ENCODE measurements at regions of chr19 and their contacts with region 1.

Region 1: DNA sequence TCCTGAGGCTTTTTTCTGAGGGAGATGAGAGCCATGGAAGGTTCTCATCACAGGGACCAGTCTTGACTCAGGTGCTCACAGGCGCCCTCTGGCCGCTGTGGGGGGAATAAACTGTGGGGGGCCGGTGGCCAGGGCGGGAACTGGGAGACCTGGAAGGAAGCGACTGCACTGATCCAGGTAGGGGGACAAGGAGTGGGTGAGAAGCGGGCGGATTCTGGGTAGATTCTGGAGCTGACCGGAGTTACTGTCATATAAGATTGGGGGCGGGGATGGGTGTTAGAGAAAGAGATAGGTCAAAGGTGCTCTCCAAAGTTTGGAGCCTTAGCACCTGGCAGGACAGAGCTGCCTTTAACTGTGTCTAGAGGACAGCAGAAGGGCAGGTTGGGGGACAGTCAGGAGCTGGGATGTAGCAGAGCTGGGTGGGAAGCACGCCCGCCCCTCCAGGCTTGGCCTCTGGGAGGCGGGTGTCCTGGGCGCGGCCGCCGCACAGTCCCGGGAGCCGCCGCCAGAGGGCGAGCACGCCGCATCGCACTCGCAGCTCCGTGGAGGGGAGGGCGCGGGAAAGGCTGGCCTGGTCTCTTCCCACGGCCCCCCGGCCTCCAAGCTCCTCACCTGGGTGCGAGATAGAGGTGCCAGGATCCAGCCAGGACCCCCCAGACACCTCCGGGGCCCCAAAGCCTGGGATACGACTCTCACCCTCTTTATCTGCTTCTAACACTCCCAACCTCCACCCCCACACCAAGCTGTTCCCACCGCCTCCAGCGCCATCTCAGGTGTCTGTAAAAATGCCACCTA is 4.2 kb upstream of the DAND5 start:
- DNase-seq: peak; percentile 88
- CTCF ChIP-seq: peak; percentile 99

Region 2: DNA sequence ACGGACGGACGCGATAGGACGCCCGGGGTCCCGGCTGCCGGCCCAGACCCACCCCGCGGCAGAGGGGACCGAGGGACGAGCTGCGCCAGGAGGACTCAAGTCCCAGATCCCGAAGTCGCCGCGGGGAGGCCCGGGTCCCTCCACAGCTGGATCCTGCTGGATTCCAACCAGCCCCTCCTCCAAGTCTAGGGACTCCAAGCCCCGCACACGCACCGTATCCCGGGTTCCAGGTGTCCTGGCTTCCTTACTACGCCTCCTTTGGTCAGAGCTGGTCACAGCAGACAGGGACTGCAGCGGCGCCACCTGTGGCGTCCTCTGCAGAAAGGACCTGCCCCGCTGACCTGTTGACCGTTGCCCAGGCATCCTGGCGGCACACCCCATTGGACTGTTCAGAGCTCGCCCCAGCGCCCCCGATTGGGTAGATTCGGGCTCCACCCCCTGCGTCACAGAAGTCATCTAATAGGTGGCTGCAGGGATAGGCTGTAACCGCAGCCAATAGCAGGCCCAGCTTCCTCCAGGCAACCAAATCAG is 451.6 kb before region 1 on chr19:
- CTCF ChIA-PET with region 1: no interaction called
- POLR2A ChIA-PET with region 1: no interaction called
- DNase-seq: no peak
- CTCF ChIP-seq: no peak

Region 3: GRCh38 chr19:12890787-12891552 is 74.2 kb before region 1 on chr19 and contains the start of gene GCDH:
- CTCF ChIA-PET with region 1: interaction called, 36 read pairs
- POLR2A ChIA-PET with region 1: interaction called, 3 read pairs
- DNase-seq: peak; percentile 97
- CTCF ChIP-seq: no peak

Region 4: GRCh38 chr19:12947702-12948584 is 17.3 kb before region 1 on chr19:
- CTCF ChIA-PET with region 1: interaction called, 56 read pairs
- POLR2A ChIA-PET with region 1: no interaction called
- DNase-seq: no peak
- CTCF ChIP-seq: no peak

Region 5: DNA sequence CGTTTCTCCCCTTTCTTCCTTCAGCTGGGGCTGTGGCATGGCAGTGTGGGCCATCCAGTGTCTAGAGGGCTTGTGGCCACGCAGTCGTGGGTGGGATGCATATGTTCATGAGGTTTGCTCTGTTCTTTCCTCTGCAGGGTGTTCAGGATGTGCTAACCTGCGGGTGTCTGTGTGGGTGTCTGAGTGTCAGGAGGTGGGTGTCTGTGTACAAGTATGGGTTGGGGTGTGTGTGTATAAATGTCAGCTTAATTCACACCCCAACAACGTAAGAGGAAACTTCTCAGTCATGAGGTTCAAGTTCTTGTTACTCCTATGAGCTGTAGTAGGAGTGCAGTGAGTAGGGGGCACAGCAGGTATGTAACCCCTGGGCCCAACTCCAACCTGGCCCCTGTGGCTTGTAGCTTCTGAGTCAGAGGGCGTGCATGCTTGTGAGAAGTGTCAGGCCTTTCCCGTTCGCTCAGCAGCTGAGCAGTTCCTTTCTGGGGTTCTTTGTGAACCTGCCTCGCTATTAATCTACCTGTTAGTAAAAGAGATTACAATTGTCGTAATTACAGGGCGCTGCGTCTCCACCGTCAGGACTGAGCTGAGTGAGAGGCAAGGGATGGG is 79.1 kb after region 1 on chr19:
- CTCF ChIA-PET with region 1: interaction called, 13 read pairs
- POLR2A ChIA-PET with region 1: no interaction called
- DNase-seq: no peak
- CTCF ChIP-seq: no peak

Region 6: GRCh38 chr19:13082192-13083007 is 117.2 kb after region 1 on chr19:
- CTCF ChIA-PET with region 1: interaction called, 26 read pairs
- POLR2A ChIA-PET with region 1: no interaction called
- DNase-seq: no peak
- CTCF ChIP-seq: peak; percentile 7

Region 7: DNA sequence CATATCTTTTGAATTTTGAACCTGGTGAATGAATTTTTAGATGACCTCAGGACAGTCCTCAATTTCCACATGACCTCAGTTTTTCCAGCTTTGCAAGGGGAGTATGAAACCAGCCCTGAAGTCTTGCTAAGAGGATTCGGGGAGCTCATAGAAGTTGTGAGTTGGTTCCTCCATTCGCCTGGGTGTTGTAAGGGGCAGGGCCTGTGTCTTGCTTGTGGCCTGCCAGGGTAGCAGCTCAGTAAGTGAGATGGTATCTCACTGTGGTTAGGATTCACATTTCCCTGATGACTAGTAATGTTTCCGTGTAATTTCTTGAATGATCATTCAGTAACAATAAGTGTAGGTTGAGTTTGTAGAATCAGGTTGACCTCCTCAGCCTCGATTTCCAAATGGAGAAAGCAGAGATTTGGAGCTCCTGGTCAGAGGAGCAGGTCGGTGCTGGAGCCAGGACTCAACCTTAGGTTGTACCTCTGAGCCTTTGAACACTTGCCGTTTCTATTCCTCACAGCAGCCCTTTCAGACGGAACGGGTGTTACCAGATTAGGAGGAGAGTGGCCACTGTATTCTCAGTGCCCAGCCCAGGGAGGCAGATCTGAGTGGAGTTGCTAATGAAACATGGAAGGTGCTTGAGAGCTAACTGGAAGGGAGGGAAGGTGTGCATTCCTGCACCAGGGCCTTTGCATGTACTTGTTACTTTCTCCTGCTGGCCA is 167.4 kb after region 1 on chr19:
- CTCF ChIA-PET with region 1: interaction called, 10 read pairs
- POLR2A ChIA-PET with region 1: no interaction called
- DNase-seq: no peak
- CTCF ChIP-seq: no peak